IMR-90 (cell line): ENCODE measurements at regions of chr1 and their contacts with region 1.

Region 1: DNA sequence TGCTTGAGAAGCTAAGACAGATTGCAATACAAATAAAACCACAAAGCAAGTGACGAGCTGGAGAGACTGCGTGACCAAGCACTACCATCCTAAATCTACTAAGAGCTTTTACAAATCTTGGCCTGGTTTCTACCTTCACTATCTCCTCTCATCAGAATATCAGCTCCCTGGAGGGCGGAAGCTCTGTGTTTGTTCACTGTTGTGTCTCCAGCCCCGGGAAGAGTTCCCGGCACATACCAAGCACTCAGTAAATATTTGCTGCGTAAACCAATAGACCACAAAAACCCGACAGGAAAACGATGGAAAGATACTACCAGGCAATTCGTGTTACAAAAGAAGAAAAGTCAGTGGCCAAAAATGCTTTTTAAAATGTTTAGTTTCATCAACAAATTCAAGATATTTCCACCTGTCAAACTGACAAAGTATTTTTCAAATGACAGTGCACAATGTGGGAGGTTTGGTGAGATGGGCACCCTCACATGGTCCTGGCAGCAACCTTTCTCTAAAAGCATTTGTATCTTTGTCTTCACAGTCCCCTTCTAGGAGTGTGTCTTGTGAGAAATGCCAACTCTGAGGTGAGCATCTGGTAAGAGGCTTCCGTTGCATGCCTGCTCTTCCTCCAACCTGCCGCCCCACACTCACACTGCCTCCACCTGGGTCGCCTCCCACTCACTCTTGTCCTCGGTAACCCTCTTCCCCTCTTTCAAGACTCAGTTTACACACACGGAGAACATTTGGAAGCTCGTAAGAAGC is 34.7 kb downstream of the SLC1A7 start:
- DNase-seq: peak; percentile 94
- ATAC-seq: peak; percentile 86
- H3K4me3 ChIP-seq: no peak overlapping the region
- H3K27ac ChIP-seq: peak overlapping the region; percentile 96
- H3K4me1 ChIP-seq: peaks cover 30% of the 10 kb centered on the region
- H3K27me3 ChIP-seq: no peaks in the 10 kb centered on the region
- CTCF ChIP-seq: no peak
- POLR2A ChIP-seq: no peak
- RAD21 ChIP-seq: peak; percentile 37

Region 2: DNA sequence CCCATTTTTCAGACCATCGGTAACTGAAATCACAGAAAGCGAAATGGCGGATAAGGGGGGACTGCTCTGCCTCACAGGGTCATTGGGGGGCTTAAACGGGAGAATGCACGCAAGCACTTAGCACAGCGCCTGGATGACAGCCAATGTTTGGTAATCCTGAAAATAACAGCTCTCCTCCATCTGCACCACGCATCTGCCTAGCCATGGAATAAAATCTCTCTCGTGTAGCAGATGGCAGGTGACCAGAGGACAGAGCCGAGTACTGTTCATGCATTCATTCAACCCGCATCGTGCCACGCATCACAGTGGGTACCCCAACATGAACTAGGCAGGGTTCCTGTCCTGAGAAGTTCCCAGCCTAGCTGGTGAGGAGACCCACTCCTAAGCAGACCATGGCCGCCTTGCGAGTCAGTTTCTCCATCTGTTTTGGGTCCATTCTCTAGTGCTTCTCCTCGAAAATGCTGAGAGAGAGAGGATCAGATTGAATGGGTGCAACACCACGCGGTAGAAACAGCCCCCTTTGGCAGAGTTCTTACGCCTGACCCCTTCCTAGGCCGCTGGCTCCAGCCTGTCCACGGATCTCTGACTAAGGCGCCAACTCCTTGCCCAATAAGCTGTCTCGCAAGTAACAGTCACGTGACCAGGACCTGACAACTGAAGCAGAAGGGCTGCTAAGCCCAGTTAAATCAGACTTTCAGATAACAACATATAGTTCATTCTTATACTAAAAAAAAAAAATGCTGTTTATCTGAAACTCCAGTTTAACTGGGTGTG is 27.4 kb after region 1 on chr1:
- CTCF ChIA-PET with region 1: interaction called, 3 read pairs
- POLR2A ChIA-PET with region 1: no interaction called
- dilution Hi-C with region 1: no loop called
- in situ Hi-C with region 1: no loop called
- intact Hi-C with region 1: loop called (anchors 2 kb)
- DNase-seq: peak; percentile 89
- ATAC-seq: peak; percentile 73
- H3K4me3 ChIP-seq: no peak overlapping the region
- H3K27ac ChIP-seq: peak overlapping the region; percentile 92
- H3K4me1 ChIP-seq: peaks cover 13% of the 10 kb centered on the region
- H3K27me3 ChIP-seq: no peaks in the 10 kb centered on the region
- CTCF ChIP-seq: no peak
- POLR2A ChIP-seq: no peak
- RAD21 ChIP-seq: no peak

Region 3: GRCh38 chr1:53207726-53208125 is 100.0 kb after region 1 on chr1:
- CTCF ChIA-PET with region 1: no interaction called
- POLR2A ChIA-PET with region 1: no interaction called
- dilution Hi-C with region 1: no loop called
- in situ Hi-C with region 1: no loop called
- intact Hi-C with region 1: no loop called
- DNase-seq: no peak
- ATAC-seq: no peak
- H3K4me3 ChIP-seq: no peak overlapping the region
- H3K27ac ChIP-seq: no peak overlapping the region
- H3K4me1 ChIP-seq: no peaks in the 10 kb centered on the region
- H3K27me3 ChIP-seq: no peaks in the 10 kb centered on the region
- CTCF ChIP-seq: no peak
- POLR2A ChIP-seq: no peak
- RAD21 ChIP-seq: no peak